Calu3 (cell line): ENCODE measurements at regions of chrX and their contacts with region 1.

Region 1: DNA sequence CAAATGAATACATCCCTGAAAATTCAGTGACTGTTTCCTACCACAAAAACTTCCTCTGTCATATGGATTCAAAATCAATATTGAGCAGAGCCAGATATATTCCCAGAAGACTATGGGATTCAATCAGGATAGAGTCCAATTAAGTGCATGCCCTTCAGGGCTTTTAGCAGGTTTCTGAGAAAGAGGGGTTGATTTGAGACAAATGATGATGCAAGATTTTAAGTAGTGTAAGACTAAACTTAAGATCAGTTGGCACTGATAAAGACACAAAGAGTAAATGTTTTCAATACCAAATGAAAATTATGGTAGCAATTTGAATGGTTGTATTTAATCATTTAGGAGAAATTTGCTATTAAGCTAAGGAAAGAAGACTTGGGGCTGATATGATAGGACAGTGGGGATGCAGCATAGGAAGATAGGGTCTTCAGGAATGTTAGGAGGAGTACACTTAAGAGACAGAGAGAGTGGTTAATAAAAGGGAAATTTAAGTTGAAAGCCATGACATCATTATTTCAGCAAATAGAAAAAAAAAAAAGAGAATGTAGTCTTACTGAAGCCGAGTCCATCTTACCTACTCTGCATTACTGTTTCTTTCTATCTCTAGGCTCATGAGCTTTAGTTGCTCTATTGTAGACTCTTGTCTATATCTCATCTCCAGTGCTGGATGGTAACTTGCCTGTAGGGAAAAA is 32.0 kb upstream of the XK start:
- DNase-seq: no peak
- H3K4me3 Mint-ChIP-seq: no peak overlapping the region
- H3K27ac Mint-ChIP-seq: no peak overlapping the region
- H3K4me1 Mint-ChIP-seq: no peaks in the 10 kb centered on the region
- H3K27me3 Mint-ChIP-seq: no peaks in the 10 kb centered on the region
- CTCF ChIP-seq: no peak

Region 2: GRCh38 chrX:37613933-37614332 is 39.6 kb before region 1 on chrX:
- CTCF ChIA-PET with region 1: no interaction called
- intact Hi-C with region 1: no loop called
- DNase-seq: no peak
- H3K4me3 Mint-ChIP-seq: no peak overlapping the region
- H3K27ac Mint-ChIP-seq: no peak overlapping the region
- H3K4me1 Mint-ChIP-seq: no peaks in the 10 kb centered on the region
- H3K27me3 Mint-ChIP-seq: no peaks in the 10 kb centered on the region
- CTCF ChIP-seq: no peak

Region 3: GRCh38 chrX:37722595-37722994 is 69.1 kb after region 1 on chrX:
- CTCF ChIA-PET with region 1: no interaction called
- intact Hi-C with region 1: no loop called
- DNase-seq: no peak
- H3K4me3 Mint-ChIP-seq: no peak overlapping the region
- H3K27ac Mint-ChIP-seq: no peak overlapping the region
- H3K4me1 Mint-ChIP-seq: no peaks in the 10 kb centered on the region
- H3K27me3 Mint-ChIP-seq: no peaks in the 10 kb centered on the region
- CTCF ChIP-seq: no peak

Region 4: DNA sequence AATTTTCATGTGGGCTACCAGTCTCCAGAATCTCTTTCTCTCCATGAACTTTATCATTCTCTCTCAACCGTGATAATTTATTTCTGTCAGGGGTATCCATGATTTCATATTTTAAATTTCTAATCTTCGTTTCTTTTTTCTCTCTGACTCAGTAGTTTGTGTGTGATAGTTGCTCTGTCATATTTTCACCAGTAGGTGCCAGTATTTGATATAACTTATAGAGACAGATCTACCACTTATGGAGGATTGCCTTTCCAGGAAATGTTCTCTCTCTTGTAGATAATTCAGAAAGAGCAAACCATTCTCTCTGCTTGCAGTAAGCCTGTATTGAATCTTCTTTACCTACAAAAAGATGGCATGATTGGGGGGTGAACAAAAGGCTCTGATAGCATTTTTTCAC is 273.2 kb after region 1 on chrX:
- CTCF ChIA-PET with region 1: no interaction called
- intact Hi-C with region 1: no loop called
- DNase-seq: no peak
- H3K4me3 Mint-ChIP-seq: no peak overlapping the region
- H3K27ac Mint-ChIP-seq: no peak overlapping the region
- H3K4me1 Mint-ChIP-seq: peaks cover 8% of the 10 kb centered on the region
- H3K27me3 Mint-ChIP-seq: no peaks in the 10 kb centered on the region
- CTCF ChIP-seq: no peak

Region 5: GRCh38 chrX:38206036-38206435 is 552.5 kb after region 1 on chrX:
- CTCF ChIA-PET with region 1: interaction called, 11 read pairs
- intact Hi-C with region 1: no loop called
- DNase-seq: no peak
- H3K4me3 Mint-ChIP-seq: no peak overlapping the region
- H3K27ac Mint-ChIP-seq: no peak overlapping the region
- H3K4me1 Mint-ChIP-seq: no peaks in the 10 kb centered on the region
- H3K27me3 Mint-ChIP-seq: peaks cover 10% of the 10 kb centered on the region
- CTCF ChIP-seq: no peak